Motor neuron (in vitro differentiated cells): ENCODE measurements at regions of chr22 and their contacts with region 1.

Region 1: GRCh38 chr22:17501679-17502285 is 61.5 kb upstream of the SLC25A18 start:
- ATAC-seq: peak; percentile 78 to 99 (median 86)
- H3K4me3 ChIP-seq: no peak overlapping the region
- H3K27ac ChIP-seq: no peak overlapping the region
- H3K4me1 ChIP-seq: no peaks in the 10 kb centered on the region

Region 2: GRCh38 chr22:16917144-16918003 is 584.4 kb before region 1 on chr22:
- in situ Hi-C with region 1: loop called in 1 of 9 experiments (anchors 25 kb)
- ATAC-seq: peak in 3 of 8 experiments; percentile 83 to 91 (median 87)
- H3K4me3 ChIP-seq: no peak overlapping the region
- H3K27ac ChIP-seq: no peak overlapping the region
- H3K4me1 ChIP-seq: no peaks in the 10 kb centered on the region

Region 3: DNA sequence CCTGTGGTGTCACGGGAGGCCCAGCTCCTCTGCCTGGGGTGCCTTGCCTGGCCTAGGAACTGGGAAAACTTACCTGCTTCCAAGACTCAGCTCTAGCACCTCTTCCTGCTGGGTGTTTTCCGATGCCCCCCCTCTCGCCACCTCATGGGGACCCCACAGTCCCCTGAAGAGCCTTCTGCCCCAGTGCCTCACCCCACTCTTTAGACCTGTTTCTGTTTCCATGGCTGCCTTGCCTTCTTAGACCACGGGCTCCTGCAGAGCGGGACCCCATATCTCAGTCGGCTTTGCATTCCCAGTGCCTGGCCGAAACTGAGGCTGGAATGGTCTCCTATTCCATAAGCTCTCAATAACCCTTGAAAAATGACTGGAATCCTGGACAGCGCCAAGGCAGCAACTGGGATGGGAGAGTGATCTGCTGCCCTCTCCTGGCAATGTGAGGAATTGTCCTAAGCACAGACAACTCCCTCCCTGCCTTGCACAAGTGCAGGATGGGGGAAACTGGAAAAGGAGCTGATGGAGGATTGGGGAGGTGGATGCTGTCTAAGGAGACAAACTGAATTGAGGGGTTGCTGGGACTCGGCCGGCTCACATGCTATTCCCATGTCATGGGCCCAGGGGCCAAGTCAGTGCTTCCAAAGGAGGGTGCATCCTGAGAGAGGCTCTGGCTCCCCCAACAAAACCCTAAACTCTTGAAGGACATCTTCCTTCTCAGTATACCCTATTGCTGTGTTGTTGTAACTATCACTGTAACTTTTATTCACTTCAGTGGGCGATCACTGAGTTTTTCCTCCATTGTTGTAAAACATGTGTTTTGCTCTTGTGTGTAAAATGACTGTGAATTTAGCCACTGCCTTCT is 443.6 kb before region 1 on chr22:
- in situ Hi-C with region 1: loop called in 1 of 9 experiments (anchors 25 kb)
- ATAC-seq: peak; percentile 36 to 98 (median 75)
- H3K4me3 ChIP-seq: no peak overlapping the region
- H3K27ac ChIP-seq: no peak overlapping the region
- H3K4me1 ChIP-seq: no peaks in the 10 kb centered on the region

Region 4: GRCh38 chr22:17084554-17085276 is 417.1 kb before region 1 on chr22 and contains the start of gene IL17RA:
- in situ Hi-C with region 1: loop called in 2 of 9 experiments (anchors 25 kb)
- ATAC-seq: peak; percentile 91 to 98 (median 96)
- H3K4me3 ChIP-seq: peak within 1 kb of the TSS; percentile 27 to 48 (median 40)
- H3K27ac ChIP-seq: no peak within 1 kb of the TSS
- H3K4me1 ChIP-seq: no peaks in the 10 kb centered on the region
- total RNA-seq, gene IL17RA: 0.27 to 7.2 (median 2.2) TPM

Region 5: DNA sequence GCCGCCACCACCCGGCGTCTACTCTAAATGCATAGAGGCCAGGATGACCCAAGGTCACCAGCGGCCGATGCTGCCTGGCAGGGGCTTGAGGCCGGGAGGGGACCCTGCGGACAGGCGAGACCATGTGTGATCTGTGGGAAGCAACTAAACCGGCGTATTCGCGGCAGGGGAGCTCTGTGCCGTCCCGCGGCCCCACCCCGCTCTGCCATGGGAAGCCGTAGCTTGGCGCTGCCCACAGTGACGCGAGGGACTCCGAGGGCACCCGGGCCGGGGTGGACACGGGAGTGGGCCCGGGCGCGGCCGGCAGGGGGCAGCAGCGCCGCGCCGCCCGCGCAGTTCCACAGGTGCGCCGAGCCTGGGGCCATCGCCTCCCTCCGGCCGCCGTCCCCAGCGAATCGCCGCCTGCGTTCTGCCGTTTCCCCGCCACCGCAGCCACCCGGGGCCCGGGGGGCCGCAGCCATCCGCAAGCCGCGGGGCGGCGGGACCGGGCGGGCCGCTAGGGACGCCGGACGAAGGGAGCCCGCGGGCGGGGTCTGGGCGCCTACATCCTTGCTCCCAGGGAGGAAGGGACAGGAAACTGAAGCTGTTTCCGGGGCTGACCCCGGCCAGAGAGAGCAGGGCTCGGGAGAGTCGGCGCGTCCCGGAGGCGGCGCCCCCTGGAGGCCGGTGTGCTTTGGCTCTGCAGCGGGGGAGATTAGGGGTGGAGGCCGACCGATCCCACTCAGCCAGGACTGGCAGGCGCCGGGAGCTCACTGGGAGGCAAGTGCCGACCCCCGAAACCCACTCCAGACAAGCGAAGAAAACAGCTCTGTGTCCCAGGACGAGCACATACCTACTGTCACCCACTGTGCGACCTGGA is 330.2 kb before region 1 on chr22:
- in situ Hi-C with region 1: loop called in 8 of 9 experiments (anchors 10 to 25 kb)
- ATAC-seq: peak; percentile 95 to 98 (median 96)
- H3K4me3 ChIP-seq: peak overlapping the region; percentile 44 to 90 (median 70)
- H3K27ac ChIP-seq: peak overlapping the region; percentile 77 to 84
- H3K4me1 ChIP-seq: peaks cover 9 to 10% of the 10 kb centered on the region in 2 donors

Region 6: DNA sequence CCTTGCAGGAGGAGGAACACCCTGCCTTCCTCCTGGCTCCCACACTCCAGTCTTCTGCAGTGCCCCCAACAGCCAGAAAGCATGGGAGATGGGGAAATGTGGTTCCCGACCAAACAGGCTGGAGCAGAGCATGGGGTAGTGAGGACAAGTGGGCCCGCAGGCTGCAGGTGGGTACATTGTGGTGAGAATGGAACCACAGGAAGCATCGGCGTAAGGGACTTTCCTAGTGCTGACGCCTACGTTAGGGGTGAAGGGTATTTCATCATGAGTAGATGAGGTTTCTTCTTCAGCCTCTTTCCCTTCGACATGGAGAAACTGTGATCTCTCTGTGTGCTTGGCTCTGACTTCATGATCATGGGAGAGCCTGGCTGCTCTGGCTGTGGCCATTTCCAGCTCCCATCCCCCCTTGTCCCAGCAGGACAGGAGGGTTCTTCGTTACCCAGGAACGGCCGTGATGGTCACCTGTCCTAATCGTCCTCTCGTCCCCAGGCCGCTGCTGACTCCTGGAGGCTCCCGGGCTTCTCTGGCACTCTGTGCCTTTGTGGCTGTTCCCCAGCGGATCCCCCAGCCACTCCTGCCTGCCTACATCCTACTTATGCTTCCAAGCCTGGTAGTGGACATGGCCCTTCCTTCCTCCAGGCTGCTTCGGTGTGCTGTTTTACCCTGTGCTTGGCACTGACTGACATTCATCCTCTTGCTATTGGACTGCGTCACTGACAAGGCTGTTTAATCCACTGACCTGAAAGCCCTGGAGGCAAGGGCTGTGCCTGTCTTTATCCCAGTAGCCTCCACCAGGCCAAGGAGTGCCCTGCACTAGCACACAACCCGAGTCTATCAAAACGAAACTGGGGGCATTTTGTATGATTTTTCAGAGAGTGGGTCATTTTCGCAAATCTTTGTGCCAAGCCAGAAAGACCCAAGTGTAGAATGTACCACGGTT is 197.7 kb before region 1 on chr22:
- in situ Hi-C with region 1: no loop called
- ATAC-seq: peak in 1 of 8 experiments; percentile 74
- H3K4me3 ChIP-seq: no peak overlapping the region
- H3K27ac ChIP-seq: no peak overlapping the region
- H3K4me1 ChIP-seq: no peaks in the 10 kb centered on the region